ENCODE measurements at regions of chr1 and their contacts with region 1.

Region 1: DNA sequence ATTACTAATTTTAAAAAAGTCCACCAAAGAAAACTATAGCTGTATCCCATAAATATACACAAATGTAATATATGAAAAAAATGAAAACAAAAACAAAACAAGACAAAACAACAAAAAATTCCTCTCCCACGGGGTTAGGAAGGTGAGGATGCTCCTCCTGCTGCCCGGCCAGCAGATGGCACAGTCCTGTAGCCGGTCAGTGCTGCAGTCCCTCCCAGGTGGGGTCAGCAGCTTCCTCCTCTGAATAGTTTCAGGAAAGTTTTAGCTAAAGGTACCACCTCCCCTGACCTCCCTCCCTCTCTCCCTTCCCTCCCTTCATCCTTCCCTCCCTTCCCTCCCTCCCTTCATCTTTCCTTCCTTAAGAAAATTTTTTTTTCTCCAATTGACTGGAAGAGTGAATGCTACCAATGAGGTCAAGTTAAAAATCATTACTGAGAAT is 67.8 kb upstream of the BCL10 start:
- DNase-seq: no peak
- H3K4me3 ChIP-seq: peak overlapping the region in 1 of 3 experiments; percentile 20
- H3K27ac ChIP-seq: peak overlapping the region; percentile 99
- H3K4me1 ChIP-seq: peaks cover 67% of the 10 kb centered on the region
- H3K27me3 ChIP-seq: no peaks in the 10 kb centered on the region
- CTCF ChIP-seq: peak; percentile 65 to 74
- POLR2A ChIP-seq: peak; percentile 54

Region 2: GRCh38 chr1:85330711-85331290 is 13.5 kb before region 1 on chr1:
- CTCF ChIA-PET with region 1: interaction called, 55 read pairs
- POLR2A ChIA-PET with region 1: interaction called, 48 read pairs
- dilution Hi-C with region 1: no loop called
- intact Hi-C with region 1: loop called (anchors 1 kb)
- DNase-seq: peak; percentile 95
- H3K4me3 ChIP-seq: no peak overlapping the region
- H3K27ac ChIP-seq: peak overlapping the region; percentile 98
- H3K4me1 ChIP-seq: peaks cover 89% of the 10 kb centered on the region
- H3K27me3 ChIP-seq: no peaks in the 10 kb centered on the region
- CTCF ChIP-seq: no peak
- POLR2A ChIP-seq: peak; percentile 68

Region 3: GRCh38 chr1:85374160-85374559 is 29.9 kb after region 1 on chr1:
- CTCF ChIA-PET with region 1: interaction called, 18 read pairs
- POLR2A ChIA-PET with region 1: no interaction called
- dilution Hi-C with region 1: no loop called
- intact Hi-C with region 1: no loop called
- DNase-seq: peak; percentile 50
- H3K4me3 ChIP-seq: no peak overlapping the region
- H3K27ac ChIP-seq: no peak overlapping the region
- H3K4me1 ChIP-seq: peaks cover 31% of the 10 kb centered on the region
- H3K27me3 ChIP-seq: no peaks in the 10 kb centered on the region
- CTCF ChIP-seq: no peak
- POLR2A ChIP-seq: no peak

Region 4: DNA sequence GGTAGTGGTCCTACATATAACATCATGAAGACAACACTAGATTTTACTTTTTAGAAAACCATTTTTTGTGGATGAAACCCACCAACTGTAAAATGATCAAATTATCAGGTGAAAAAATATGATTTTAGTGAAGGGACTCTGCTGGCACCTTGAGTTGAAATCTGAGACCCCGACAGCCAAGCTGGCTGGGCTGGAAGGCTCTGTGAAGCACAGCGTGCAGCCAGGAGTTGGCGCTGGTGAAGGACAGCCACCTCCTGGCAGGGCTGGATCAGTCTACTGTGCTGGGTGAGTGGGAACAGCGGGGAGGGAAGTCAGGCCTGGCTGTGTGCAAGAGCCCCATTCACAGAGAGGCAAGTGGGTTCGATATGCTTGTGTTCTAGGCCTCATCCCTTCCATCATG is 72.7 kb after region 1 on chr1:
- CTCF ChIA-PET with region 1: interaction called, 7 read pairs
- POLR2A ChIA-PET with region 1: interaction called, 8 read pairs
- dilution Hi-C with region 1: no loop called
- intact Hi-C with region 1: loop called (anchors 1 kb)
- DNase-seq: peak; percentile 74
- H3K4me3 ChIP-seq: no peak overlapping the region
- H3K27ac ChIP-seq: peak overlapping the region; percentile 61
- H3K4me1 ChIP-seq: peaks cover 30% of the 10 kb centered on the region
- H3K27me3 ChIP-seq: no peaks in the 10 kb centered on the region
- CTCF ChIP-seq: peak in 1 of 2 donors; percentile 47
- POLR2A ChIP-seq: no peak

Region 5: GRCh38 chr1:85502625-85503083 is 158.4 kb after region 1 on chr1:
- CTCF ChIA-PET with region 1: interaction called, 8 read pairs
- POLR2A ChIA-PET with region 1: no interaction called
- dilution Hi-C with region 1: no loop called
- intact Hi-C with region 1: loop called (anchors 1 kb)
- DNase-seq: peak; percentile 87
- H3K4me3 ChIP-seq: no peak overlapping the region
- H3K27ac ChIP-seq: no peak overlapping the region
- H3K4me1 ChIP-seq: no peaks in the 10 kb centered on the region
- H3K27me3 ChIP-seq: no peaks in the 10 kb centered on the region
- CTCF ChIP-seq: peak; percentile 46 to 58
- POLR2A ChIP-seq: no peak

Region 6: GRCh38 chr1:85607126-85607912 is 263.0 kb after region 1 on chr1:
- CTCF ChIA-PET with region 1: interaction called, 6 read pairs
- POLR2A ChIA-PET with region 1: no interaction called
- dilution Hi-C with region 1: no loop called
- intact Hi-C with region 1: loop called (anchors 1 kb)
- DNase-seq: peak; percentile 91
- H3K4me3 ChIP-seq: peak overlapping the region in 1 of 3 experiments; percentile 4
- H3K27ac ChIP-seq: peak overlapping the region; percentile 85
- H3K4me1 ChIP-seq: peaks cover 27% of the 10 kb centered on the region
- H3K27me3 ChIP-seq: no peaks in the 10 kb centered on the region
- CTCF ChIP-seq: no peak
- POLR2A ChIP-seq: peak; percentile 76

Region 7: DNA sequence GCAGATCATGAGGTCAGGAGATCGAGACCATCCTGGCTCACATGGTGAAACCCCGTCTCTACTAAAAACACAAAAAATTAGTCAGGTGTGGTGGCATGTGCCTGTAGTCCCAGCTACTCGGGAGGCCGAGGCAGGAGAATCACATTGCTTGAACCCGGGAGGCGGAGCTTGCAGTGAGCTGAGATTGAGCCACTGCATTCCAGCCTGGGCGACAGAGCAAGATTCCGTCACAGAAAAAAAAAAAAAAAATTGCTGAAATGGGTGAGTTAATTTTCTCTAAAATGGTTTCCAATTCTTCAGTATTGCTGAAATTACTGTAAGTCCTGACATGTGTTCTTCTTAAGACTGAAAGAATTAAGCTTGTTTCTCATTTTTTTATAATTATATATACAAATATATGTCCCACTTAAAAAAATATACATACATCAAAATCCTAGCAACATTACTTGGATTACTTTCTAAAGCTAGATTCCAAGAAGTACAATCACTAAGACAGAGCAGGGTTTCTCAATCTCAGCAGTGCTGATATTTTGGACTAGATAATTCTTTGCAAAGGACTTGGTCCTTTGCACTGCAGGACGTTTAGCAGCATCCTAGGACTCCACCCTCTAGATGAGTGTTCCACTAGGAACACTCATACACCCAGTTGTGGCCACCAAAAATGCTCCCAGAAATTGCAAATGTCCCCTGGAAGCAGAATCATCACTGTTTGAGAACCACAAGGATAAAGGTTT is 339.2 kb after region 1 on chr1:
- CTCF ChIA-PET with region 1: no interaction called
- POLR2A ChIA-PET with region 1: no interaction called
- dilution Hi-C with region 1: no loop called
- intact Hi-C with region 1: no loop called
- DNase-seq: no peak
- H3K4me3 ChIP-seq: no peak overlapping the region
- H3K27ac ChIP-seq: no peak overlapping the region
- H3K4me1 ChIP-seq: no peaks in the 10 kb centered on the region
- H3K27me3 ChIP-seq: no peaks in the 10 kb centered on the region
- CTCF ChIP-seq: no peak
- POLR2A ChIP-seq: no peak

Measured in endothelial cell of umbilical vein (primary cell).